A673 (cell line): ENCODE measurements at regions of chr11 and their contacts with region 1.

Region 1: DNA sequence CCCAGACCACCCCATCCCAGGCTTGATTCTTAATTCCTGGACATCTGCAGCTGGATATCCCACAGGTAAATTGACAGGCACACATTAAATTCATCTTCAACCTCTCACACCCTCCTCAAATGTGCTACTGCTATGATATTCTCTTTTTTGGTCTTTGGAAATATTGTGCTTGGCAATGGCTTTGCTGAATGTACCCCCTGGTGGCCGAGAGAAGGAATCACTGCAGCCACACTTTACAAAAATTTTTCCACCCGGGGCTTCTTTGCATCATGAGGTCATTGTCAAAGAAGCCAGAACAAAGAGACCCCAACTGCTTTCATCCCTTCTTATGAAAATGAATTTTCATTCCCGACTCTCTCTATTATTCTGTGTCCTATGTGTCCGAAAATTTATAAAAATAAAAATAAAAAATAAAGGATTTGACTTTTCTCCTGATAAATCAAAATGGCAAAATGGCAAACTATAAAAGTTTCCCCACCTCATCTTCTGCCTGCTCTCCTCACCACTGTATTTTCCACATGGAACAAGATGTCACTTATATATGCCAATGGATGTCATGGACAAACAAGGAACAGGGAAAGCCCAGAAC is 15.0 kb upstream of the CYB5R2 start:
- DNase-seq: peak; percentile 52
- H3K4me3 ChIP-seq: no peak overlapping the region
- H3K27ac ChIP-seq: no peak overlapping the region
- H3K4me1 ChIP-seq: no peaks in the 10 kb centered on the region
- H3K27me3 ChIP-seq: peaks cover 6% of the 10 kb centered on the region
- CTCF ChIP-seq: peak; percentile 71

Region 2: DNA sequence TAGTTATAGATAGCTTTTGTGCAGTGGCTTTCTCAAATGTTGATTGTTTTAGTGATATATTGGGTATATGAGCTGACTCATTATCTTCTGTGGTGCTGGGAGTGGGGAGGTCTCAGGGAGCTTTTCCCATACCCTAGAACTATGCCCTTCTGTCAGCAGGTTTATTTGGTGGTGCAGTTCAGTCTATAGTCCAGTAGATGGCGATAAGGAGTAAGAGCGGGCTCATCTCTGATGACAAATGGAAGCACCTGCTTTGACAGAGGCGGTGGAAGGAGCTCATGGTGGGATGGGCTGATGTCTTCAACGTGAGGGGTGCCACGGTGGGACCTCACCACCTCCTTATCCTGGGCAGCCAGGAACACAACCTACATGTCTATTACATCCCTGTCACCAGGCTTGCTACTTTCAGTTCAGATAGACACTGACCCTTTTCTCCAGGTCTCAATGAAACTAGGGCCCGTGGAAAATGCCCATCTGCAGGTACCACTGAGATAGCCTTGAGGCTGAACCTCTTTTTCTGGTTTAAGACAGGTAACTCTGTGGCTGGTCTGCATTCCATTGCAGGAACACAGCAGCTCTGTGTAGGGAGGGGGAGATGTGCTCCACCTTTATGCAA is 875.8 kb before region 1 on chr11:
- CTCF ChIA-PET with region 1: interaction called, 3 read pairs
- POLR2A ChIA-PET with region 1: no interaction called
- intact Hi-C with region 1: loop called (anchors 5 kb)
- DNase-seq: peak; percentile 54
- H3K4me3 ChIP-seq: no peak overlapping the region
- H3K27ac ChIP-seq: no peak overlapping the region
- H3K4me1 ChIP-seq: no peaks in the 10 kb centered on the region
- H3K27me3 ChIP-seq: no peaks in the 10 kb centered on the region
- CTCF ChIP-seq: peak; percentile 84

Region 3: DNA sequence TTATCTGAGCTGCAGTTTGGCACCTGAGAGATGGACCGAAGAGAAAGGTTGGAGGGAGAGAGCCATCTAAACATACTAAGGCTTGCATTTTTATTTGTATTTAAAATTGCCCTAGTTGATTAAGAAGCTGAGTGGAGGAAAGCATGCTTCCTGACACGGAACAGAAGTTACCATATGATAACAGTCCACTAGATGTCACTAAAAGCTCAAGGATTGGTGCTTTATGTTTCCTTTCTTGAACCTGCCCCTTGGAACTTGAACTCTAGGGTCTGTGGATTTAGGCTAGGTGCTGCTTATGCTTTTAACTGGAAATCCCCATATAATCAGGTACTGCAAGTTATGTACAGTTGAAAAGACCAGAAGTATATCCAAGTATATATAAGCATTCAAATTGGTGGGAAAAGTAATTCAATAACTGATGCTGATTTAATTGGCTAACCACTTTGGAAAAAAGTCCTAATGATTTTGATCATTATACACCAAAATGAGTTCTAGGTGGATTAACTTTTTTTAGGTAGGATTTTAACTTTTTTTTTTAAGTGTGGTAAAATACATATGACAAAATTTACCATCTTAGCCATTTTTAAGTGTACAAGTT is 590.0 kb before region 1 on chr11:
- CTCF ChIA-PET with region 1: interaction called, 4 read pairs
- POLR2A ChIA-PET with region 1: no interaction called
- intact Hi-C with region 1: loop called (anchors 2 kb)
- DNase-seq: peak; percentile 49
- H3K4me3 ChIP-seq: no peak overlapping the region
- H3K27ac ChIP-seq: no peak overlapping the region
- H3K4me1 ChIP-seq: no peaks in the 10 kb centered on the region
- H3K27me3 ChIP-seq: peaks cover 12% of the 10 kb centered on the region
- CTCF ChIP-seq: peak; percentile 62

Region 4: GRCh38 chr11:7353100-7353499 is 335.2 kb before region 1 on chr11:
- CTCF ChIA-PET with region 1: interaction called, 3 read pairs
- POLR2A ChIA-PET with region 1: no interaction called
- intact Hi-C with region 1: loop called (anchors 5 kb)
- DNase-seq: peak; percentile 40
- H3K4me3 ChIP-seq: no peak overlapping the region
- H3K27ac ChIP-seq: no peak overlapping the region
- H3K4me1 ChIP-seq: no peaks in the 10 kb centered on the region
- H3K27me3 ChIP-seq: no peaks in the 10 kb centered on the region
- CTCF ChIP-seq: peak; percentile 50

Region 5: DNA sequence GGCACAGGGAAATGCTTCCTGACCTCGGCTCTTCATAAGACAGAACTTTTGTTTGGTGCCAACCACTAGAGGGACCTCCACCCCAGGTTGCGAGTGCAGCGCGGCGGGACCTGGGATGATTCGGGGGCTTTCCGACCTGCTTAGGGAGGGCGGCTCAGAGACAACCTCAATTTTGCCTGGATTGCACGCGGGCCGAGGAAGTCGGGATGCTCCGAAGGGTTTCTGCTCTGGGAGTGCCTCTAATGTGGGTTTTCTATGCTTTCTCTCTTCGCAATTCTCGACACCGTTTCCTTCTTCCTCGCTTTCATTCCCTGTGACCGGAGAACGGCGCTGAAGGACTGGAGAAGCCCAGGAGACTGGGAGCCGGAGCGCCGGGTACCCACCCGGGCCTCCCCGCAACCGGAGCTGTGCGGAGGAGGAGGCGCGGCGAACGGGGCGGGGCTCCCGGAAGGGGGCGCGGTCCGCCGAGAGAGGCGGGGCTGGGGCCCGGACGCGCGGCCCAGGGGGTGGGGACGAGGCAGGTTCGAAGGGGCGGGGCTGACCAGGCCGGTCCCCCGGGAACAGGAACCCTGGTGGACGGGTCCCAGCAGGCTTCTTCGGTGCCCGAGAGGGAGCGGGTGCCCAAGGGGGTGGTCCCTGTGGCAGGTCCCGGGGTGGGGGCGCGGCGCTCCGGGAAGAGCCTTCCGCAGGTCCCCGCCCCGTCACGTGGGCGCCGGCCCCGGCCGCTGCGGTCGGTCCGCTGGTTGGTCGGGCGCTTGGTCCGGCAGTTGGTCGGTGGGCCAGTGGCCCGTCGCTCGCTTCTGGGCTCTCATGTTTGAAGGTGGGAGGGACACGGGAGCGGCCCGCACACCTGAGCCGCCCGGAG is 174.9 kb before region 1 on chr11 and contains the start of gene PPFIBP2:
- CTCF ChIA-PET with region 1: no interaction called
- POLR2A ChIA-PET with region 1: no interaction called
- intact Hi-C with region 1: loop called (anchors 5 kb)
- DNase-seq: peak; percentile 63
- H3K4me3 ChIP-seq: peak within 1 kb of the TSS; percentile 61
- H3K27ac ChIP-seq: no peak within 1 kb of the TSS
- H3K4me1 ChIP-seq: peaks cover 8% of the 10 kb centered on the region
- H3K27me3 ChIP-seq: peaks cover 20% of the 10 kb centered on the region
- CTCF ChIP-seq: peak; percentile 60
- total RNA-seq, gene PPFIBP2: 5.7 and 6.8 TPM in 2 replicates

Region 6: DNA sequence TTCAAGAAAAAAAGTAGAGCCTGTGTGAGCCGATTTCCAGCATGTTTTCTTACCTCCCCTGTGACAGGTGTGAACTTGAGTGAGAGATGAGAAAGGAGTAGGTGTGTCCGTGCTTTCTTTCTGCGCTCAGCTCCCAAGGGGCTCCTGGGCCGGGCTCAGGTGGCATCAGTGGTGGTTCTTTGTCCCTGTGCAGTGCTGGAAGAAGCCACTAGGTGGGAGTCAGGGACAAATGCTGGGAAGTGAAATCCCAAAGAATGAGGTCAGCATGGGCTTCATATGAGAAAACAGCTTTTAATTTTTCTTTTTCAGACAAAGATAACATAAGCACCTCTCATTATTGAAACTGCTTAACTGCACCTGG is 116.7 kb before region 1 on chr11:
- CTCF ChIA-PET with region 1: interaction called, 7 read pairs
- POLR2A ChIA-PET with region 1: no interaction called
- intact Hi-C with region 1: loop called (anchors 1 kb)
- DNase-seq: peak; percentile 70
- H3K4me3 ChIP-seq: no peak overlapping the region
- H3K27ac ChIP-seq: no peak overlapping the region
- H3K4me1 ChIP-seq: peaks cover 17% of the 10 kb centered on the region
- H3K27me3 ChIP-seq: no peaks in the 10 kb centered on the region
- CTCF ChIP-seq: peak; percentile 80

Region 7: DNA sequence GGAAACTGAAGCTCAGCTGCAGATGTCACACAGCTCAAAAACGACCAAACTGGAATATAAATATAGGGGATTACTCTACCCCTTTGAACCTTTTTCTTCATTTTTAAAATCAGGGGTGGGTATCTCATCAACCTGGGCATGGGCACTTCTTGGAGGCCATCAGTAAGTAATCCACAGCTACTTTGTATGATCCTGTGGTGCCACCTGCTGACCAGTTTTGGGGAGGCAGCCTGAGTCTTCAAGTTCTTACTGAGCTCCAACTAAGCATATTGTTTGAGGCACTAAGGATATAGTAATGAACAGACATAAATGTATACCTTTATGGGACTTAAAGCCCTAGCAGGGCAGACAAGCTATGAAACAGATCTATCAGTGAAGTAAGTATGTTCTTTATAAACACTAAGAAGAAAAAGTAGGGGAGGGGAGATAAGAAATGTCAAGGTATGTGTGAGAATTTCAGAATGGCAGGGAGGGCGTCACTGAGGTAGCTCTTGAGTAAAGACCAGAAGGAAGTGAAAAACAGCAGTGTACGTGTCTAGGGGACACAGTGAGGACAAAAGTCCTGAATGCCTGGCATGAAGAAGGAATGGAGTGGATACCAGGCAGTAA is 411.1 kb after region 1 on chr11:
- CTCF ChIA-PET with region 1: no interaction called
- POLR2A ChIA-PET with region 1: no interaction called
- intact Hi-C with region 1: loop called (anchors 10 kb)
- DNase-seq: peak; percentile 71
- H3K4me3 ChIP-seq: no peak overlapping the region
- H3K27ac ChIP-seq: no peak overlapping the region
- H3K4me1 ChIP-seq: no peaks in the 10 kb centered on the region
- H3K27me3 ChIP-seq: no peaks in the 10 kb centered on the region
- CTCF ChIP-seq: peak; percentile 79